Left lung (tissue), 14 donors: ENCODE measurements at regions of chr11 and their contacts with region 1.

Region 1: DNA sequence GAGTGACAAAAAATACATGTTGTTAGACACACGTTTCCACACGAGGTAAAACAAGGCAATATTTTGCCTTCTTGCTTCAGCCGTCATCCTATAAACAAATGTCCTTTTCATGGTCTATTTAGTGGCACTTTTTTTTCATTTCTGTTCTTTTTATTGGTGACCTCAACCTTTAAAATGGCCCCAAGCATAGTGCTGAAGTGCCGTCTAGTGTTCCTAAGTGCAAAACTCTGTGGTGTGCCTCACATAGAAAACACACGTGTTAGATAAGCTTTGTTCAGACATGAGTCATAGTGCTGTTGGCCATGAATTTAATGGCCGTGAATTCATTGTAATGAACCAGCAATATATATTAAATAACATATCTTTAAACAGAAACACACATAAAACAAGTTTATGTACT is 15.6 kb downstream of the OVCH2 start:
- DNase-seq: no peak
- ATAC-seq: no peak
- H3K4me3 ChIP-seq: no peak overlapping the region
- H3K27ac ChIP-seq: no peak overlapping the region
- H3K4me1 ChIP-seq: no peaks in the 10 kb centered on the region
- H3K27me3 ChIP-seq: peaks cover 0 to 25% of the 10 kb centered on the region in 2 donors
- CTCF ChIP-seq: no peak

Region 2: DNA sequence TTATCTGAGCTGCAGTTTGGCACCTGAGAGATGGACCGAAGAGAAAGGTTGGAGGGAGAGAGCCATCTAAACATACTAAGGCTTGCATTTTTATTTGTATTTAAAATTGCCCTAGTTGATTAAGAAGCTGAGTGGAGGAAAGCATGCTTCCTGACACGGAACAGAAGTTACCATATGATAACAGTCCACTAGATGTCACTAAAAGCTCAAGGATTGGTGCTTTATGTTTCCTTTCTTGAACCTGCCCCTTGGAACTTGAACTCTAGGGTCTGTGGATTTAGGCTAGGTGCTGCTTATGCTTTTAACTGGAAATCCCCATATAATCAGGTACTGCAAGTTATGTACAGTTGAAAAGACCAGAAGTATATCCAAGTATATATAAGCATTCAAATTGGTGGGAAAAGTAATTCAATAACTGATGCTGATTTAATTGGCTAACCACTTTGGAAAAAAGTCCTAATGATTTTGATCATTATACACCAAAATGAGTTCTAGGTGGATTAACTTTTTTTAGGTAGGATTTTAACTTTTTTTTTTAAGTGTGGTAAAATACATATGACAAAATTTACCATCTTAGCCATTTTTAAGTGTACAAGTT is 592.3 kb before region 1 on chr11:
- intact Hi-C with region 1: loop called in 1 of 2 experiments (anchors 10 kb)
- DNase-seq: peak in 2 of 4 donors; percentile 36 to 47
- ATAC-seq: peak; percentile 76
- H3K4me3 ChIP-seq: no peak overlapping the region
- H3K27ac ChIP-seq: no peak overlapping the region
- H3K4me1 ChIP-seq: no peaks in the 10 kb centered on the region
- H3K27me3 ChIP-seq: peaks cover 0 to 10% of the 10 kb centered on the region in 2 donors
- CTCF ChIP-seq: peak; percentile 48 to 50

Region 3: GRCh38 chr11:7621090-7621489 is 69.6 kb before region 1 on chr11:
- intact Hi-C with region 1: no loop called
- DNase-seq: no peak
- ATAC-seq: no peak
- H3K4me3 ChIP-seq: no peak overlapping the region
- H3K27ac ChIP-seq: no peak overlapping the region
- H3K4me1 ChIP-seq: no peaks in the 10 kb centered on the region
- H3K27me3 ChIP-seq: no peaks in the 10 kb centered on the region
- CTCF ChIP-seq: no peak